ENCODE measurements at regions of chr15 and their contacts with region 1.

Region 1: GRCh38 chr15:43977072-43977884 is 150.5 kb downstream of the WDR76 start:
- DNase-seq: no peak

Region 2: DNA sequence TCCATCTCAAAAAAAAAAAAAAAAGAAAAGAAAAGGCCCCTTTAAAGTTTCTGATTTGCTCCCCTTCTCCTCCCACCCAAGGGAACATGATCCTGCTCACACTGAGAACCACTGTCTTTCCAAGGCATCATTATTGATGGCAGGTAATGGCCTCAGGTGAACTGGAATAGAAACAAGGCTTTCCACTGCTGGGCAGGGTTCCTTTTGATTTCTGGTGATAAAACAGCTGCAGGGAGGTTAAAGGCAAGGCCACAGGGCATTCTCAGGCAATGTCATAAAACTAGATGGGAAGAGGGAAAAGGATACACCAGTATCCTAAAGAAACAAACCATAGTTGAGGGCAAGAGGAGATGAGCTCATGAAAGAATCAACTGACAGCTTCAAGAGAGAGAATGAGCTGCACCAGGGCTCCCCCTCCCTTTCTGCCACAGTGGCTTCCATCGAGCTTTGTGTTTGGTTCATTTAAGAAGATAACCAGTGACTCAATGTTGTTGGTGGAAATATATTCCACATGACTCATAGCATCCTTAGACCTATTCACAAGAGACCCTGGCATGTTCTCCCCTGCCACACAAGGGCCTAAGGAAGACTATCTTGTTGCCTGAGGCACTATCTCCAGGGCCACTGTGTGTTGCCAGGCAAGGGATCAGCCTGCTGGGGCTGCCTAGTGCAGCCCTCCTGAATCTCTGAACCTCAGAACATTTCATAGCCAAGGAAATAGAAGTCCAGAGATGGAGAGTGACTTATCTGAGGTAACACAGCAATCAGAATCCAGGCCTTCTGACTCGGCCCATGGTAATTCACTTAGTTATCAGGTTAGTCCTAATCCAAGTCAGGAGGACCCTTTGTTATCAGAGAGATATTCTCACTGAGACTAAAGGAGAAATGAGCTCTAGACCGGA is 64.0 kb before region 1 on chr15:
- intact Hi-C with region 1: loop called (anchors 5 kb)
- DNase-seq: peak; percentile 83

Region 3: DNA sequence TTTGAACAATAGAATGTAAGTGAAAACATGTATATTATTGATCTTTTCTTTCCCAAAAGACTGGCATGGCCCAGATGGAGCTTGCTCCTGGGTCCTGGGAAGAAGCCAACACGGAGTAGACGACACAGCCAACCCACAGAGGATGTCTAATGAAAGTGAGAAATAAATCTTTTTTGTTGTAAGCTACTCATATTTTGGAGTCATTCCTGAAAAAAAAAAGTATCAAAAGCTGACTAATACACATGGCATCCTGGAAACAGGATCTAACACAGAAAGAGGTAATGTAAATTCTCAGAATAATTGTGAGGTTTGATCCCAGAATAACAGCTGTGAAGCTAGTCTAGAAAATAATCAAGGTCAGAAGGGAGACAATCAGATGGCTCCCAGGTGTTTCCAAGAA is 230.4 kb after region 1 on chr15:
- intact Hi-C with region 1: no loop called
- DNase-seq: no peak

Region 4: GRCh38 chr15:44489464-44489863 is 512.2 kb after region 1 on chr15:
- intact Hi-C with region 1: no loop called
- DNase-seq: no peak

Measured in cardiac septum (tissue), 1 donor.